ENCODE measurements at regions of chr9 and their contacts with region 1.

Region 1: GRCh38 chr9:21598749-21599148 is 116.6 kb upstream of the IFNE start:
- DNase-seq: no peak
- ATAC-seq: no peak
- H3K4me3 ChIP-seq: no peak overlapping the region
- H3K4me3 Mint-ChIP-seq: no peak overlapping the region
- H3K27ac ChIP-seq: no peak overlapping the region
- H3K27ac Mint-ChIP-seq: no peak overlapping the region
- H3K4me1 ChIP-seq: no peaks in the 10 kb centered on the region
- H3K4me1 Mint-ChIP-seq: peaks cover 0 to 2% (median 0%) of the 10 kb centered on the region in 3 donors
- H3K27me3 ChIP-seq: peaks cover 0 to 8% of the 10 kb centered on the region in 2 experiments
- H3K27me3 Mint-ChIP-seq: peaks cover under 1 to 12% of the 10 kb centered on the region in 2 donors

Region 2: GRCh38 chr9:21443849-21444625 is 154.7 kb before region 1 on chr9:
- CTCF ChIA-PET with region 1: no interaction called
- POLR2A ChIA-PET with region 1: no interaction called
- DNase-seq: peak in 23 of 35 experiments; percentile 4 to 72 (median 31)
- ATAC-seq: peak; percentile 85 to 95 (median 86)
- H3K4me3 ChIP-seq: peak overlapping the region in 1 of 2 donors; percentile 44
- H3K4me3 Mint-ChIP-seq: peak overlapping the region; percentile 8 to 27 (median 25)
- H3K27ac ChIP-seq: peak overlapping the region; percentile 38
- H3K27ac Mint-ChIP-seq: peak overlapping the region; percentile 79 to 85
- H3K4me1 ChIP-seq: peaks cover 8 to 12% of the 10 kb centered on the region in 2 experiments
- H3K4me1 Mint-ChIP-seq: peaks cover 15 to 18% (median 15%) of the 10 kb centered on the region in 3 donors
- H3K27me3 ChIP-seq: no peaks in the 10 kb centered on the region
- H3K27me3 Mint-ChIP-seq: peaks cover 0 to 2% of the 10 kb centered on the region in 2 donors

Region 3: GRCh38 chr9:21528123-21528808 is 70.5 kb before region 1 on chr9:
- CTCF ChIA-PET with region 1: no interaction called
- POLR2A ChIA-PET with region 1: no interaction called
- DNase-seq: no peak
- ATAC-seq: no peak
- H3K4me3 ChIP-seq: no peak overlapping the region
- H3K4me3 Mint-ChIP-seq: no peak overlapping the region
- H3K27ac ChIP-seq: no peak overlapping the region
- H3K27ac Mint-ChIP-seq: no peak overlapping the region
- H3K4me1 ChIP-seq: no peaks in the 10 kb centered on the region
- H3K4me1 Mint-ChIP-seq: no peaks in the 10 kb centered on the region
- H3K27me3 ChIP-seq: peaks cover 0 to 12% of the 10 kb centered on the region in 2 experiments
- H3K27me3 Mint-ChIP-seq: peaks cover 0 to 7% of the 10 kb centered on the region in 2 donors

Region 4: DNA sequence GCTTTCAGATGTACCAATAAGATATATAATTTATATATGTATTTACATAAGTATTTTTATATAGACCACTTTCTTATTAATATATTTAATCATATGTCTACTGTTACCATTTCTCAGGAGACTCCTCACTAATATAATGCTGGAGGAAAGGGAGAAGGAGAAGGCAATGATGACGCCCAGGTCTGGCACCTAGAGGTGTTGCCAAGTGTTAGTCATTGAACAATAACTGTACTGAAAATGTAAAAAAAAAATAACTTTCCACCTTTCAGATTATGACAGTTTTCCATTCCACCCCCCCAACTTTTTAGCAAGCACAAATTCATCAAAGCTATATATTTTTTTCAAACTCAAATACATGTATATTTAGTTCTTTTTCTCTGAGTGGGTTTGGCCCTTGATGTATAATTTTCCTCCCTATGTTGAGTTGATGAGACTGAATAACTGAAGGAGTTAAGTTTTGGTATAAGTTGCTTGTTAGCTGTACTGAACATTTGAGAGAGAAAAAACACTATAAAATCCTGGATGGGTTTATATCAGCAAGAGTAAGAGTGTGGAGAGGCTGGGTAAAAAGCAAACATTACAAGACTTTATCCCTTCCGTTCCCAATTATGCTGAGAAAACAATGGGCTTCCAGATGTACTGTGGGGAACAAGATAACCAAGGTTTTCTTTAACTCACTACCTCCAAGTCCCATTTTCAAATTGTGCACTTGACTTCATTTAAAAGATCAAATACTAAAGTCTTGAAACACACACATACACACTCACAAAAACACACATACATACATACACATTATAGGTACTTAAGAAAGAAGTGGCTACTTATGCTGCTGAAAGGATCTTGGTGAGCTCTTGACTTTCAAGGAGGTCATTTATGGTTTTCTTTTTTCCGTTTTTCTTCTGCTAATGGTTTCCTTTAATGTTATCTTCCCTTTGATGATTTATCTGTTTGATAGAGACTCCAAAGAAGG is 26.2 kb after region 1 on chr9:
- CTCF ChIA-PET with region 1: no interaction called
- POLR2A ChIA-PET with region 1: interaction called in 1 of 2 experiments, 10 read pairs
- DNase-seq: no peak
- ATAC-seq: no peak
- H3K4me3 ChIP-seq: no peak overlapping the region
- H3K4me3 Mint-ChIP-seq: no peak overlapping the region
- H3K27ac ChIP-seq: no peak overlapping the region
- H3K27ac Mint-ChIP-seq: no peak overlapping the region
- H3K4me1 ChIP-seq: peaks cover 0 to 6% of the 10 kb centered on the region in 2 experiments
- H3K4me1 Mint-ChIP-seq: peaks cover 11 to 16% (median 14%) of the 10 kb centered on the region in 3 donors
- H3K27me3 ChIP-seq: peaks cover 0 to 12% of the 10 kb centered on the region in 2 experiments
- H3K27me3 Mint-ChIP-seq: peaks cover 0 to 6% of the 10 kb centered on the region in 2 donors